ENCODE measurements at regions of chr1 and their contacts with region 1.

Region 1: GRCh38 chr1:235952950-235953615 is 86.4 kb upstream of the LYST start:
- DNase-seq: peak; percentile 36
- H3K4me3 Mint-ChIP-seq: peak overlapping the region; percentile 19
- H3K27ac Mint-ChIP-seq: peak overlapping the region; percentile 40
- H3K4me1 Mint-ChIP-seq: peaks cover 34% of the 10 kb centered on the region
- H3K27me3 Mint-ChIP-seq: peaks cover 30% of the 10 kb centered on the region

Region 2: DNA sequence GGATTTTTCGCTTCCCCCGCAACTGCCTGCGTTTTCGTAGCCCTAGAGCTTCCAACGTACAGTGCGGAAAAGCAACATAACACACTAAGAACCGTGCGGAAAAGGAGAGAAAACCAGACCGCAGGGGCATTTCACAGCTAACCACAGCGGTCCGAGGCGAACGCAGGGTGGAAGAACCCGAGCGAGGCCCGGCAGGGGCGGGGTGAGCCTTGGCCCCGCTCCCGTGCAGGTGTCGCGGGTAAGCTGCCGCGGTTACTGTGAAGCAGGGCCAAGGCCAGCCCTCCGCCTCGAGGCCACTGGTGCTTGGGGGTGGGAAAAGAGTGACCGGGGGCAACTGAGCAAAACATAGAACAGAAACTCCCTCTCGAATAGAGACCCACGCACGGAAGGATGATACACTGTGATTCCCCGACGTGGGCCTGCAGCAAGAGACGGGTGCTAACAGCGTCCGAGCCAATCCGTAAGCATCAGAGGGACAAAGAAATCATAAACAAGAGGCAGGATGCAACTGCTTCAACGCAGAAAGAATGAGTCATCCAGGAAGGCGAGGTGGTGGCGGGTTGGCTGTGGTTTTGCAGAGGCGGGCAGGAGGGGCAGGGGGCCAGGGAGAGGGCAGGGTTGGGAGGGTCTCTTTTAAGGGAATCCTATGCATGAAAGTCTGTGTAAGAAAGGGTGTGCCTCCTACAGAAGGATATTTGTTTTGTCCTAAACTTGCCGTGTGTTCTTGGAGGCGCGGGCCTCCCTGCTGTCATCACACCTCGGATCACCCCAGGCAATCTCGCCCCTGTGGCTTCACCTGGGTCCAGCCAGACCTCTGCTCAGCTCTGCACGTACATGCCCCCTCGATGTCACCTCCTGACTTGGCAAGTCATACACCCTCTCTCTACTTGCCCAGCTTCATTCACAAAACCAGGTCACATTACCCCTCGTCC is 310.8 kb before region 1 on chr1:
- intact Hi-C with region 1: loop called (anchors 1 kb)
- DNase-seq: peak; percentile 76
- H3K4me3 Mint-ChIP-seq: peak overlapping the region; percentile 67
- H3K27ac Mint-ChIP-seq: peak overlapping the region; percentile 92
- H3K4me1 Mint-ChIP-seq: peaks cover 71% of the 10 kb centered on the region
- H3K27me3 Mint-ChIP-seq: peaks cover 17% of the 10 kb centered on the region

Region 3: DNA sequence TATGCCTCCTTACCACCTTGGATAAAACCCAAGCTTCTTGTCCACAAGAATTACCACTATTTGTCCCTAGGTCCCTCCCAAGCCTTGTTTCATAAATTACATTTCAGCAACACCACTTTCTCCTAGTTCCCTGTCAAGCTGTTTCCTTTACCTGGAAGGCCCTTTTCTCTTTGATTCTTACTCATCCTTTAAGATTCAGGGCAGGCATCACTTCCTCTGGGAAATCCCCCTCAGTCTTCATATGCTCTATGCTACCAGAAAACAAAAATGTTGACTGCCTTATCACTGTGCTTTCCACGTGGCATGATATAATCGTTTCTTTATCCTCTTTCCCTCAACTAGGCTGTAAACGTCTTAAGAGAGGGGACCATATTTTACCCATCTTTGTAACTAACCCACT is 189.1 kb before region 1 on chr1:
- intact Hi-C with region 1: loop called (anchors 1 kb)
- DNase-seq: peak; percentile 16
- H3K4me3 Mint-ChIP-seq: no peak overlapping the region
- H3K27ac Mint-ChIP-seq: no peak overlapping the region
- H3K4me1 Mint-ChIP-seq: peaks cover 14% of the 10 kb centered on the region
- H3K27me3 Mint-ChIP-seq: no peaks in the 10 kb centered on the region

Region 4: DNA sequence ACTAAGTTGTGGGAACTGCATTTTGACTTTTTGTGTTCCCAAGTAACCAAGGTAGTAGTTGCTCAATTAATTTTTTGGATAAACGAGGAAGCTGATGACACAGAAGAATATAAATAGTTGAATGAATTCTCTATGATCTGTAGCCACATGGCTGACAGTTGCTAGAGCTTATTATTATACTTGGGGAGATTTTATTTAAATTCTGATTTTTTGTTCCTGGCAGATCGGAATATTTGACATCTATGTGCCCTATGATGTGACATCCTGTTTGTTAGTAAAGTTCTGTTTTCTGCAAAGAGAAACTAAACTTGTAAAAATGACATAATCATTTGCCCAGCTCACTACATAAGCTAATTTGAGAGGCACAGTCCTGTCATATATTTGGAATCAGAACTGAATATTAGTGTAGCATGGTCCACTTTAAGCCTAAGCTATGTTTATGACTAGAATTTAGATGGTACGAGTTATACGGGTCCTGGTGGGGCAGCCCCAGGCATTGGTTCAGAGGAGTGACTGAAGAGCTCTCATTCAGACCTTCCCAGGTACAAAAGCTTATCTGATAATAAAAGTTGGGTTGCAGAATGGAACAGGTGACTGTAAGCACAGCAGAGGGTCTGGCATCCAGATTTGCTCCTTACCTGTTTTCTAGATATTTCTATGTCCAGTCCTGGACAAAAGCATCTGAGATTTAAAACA is 76.5 kb before region 1 on chr1:
- intact Hi-C with region 1: loop called (anchors 1 kb)
- DNase-seq: no peak
- H3K4me3 Mint-ChIP-seq: peak overlapping the region; percentile 69
- H3K27ac Mint-ChIP-seq: peak overlapping the region; percentile 98
- H3K4me1 Mint-ChIP-seq: peaks cover 88% of the 10 kb centered on the region
- H3K27me3 Mint-ChIP-seq: no peaks in the 10 kb centered on the region

Region 5: GRCh38 chr1:235910357-235911299 is 42.5 kb before region 1 on chr1:
- intact Hi-C with region 1: loop called (anchors 1 kb)
- DNase-seq: no peak
- H3K4me3 Mint-ChIP-seq: peak overlapping the region; percentile 41
- H3K27ac Mint-ChIP-seq: peak overlapping the region; percentile 60
- H3K4me1 Mint-ChIP-seq: peaks cover 37% of the 10 kb centered on the region
- H3K27me3 Mint-ChIP-seq: no peaks in the 10 kb centered on the region

Region 6: GRCh38 chr1:235938709-235939479 is 14.2 kb before region 1 on chr1:
- intact Hi-C with region 1: loop called (anchors 1 kb)
- DNase-seq: peak; percentile 10
- H3K4me3 Mint-ChIP-seq: peak overlapping the region; percentile 42
- H3K27ac Mint-ChIP-seq: peak overlapping the region; percentile 84
- H3K4me1 Mint-ChIP-seq: peaks cover 52% of the 10 kb centered on the region
- H3K27me3 Mint-ChIP-seq: peaks cover 4% of the 10 kb centered on the region

Region 7: DNA sequence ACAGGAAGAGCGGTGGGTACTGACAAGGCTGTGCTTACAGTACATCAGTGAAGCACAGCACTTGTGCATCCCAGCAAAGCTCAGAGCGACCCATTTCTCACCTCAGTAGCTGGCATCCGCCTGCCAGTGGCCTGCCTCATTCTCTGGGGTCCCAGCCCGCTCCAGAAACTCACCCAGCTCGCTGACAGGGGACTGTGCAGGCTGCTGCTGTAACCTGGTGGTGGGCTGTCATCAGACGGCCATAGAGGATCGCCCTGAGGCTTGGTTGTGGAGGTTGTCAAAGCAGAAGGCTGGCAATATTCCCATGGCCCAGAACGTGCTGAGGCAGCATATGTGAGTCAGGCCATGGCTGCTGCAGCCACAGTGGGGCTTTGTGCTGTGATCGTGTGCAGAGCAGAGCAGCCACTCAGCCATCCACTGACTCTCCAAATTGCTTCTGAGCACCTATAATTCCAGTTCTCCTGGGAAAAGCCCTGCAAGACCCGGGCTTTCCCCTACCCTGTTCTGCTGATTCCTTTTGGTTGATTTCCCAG is 175.6 kb after region 1 on chr1:
- intact Hi-C with region 1: no loop called
- DNase-seq: no peak
- H3K4me3 Mint-ChIP-seq: no peak overlapping the region
- H3K27ac Mint-ChIP-seq: no peak overlapping the region
- H3K4me1 Mint-ChIP-seq: no peaks in the 10 kb centered on the region
- H3K27me3 Mint-ChIP-seq: peaks cover 23% of the 10 kb centered on the region

Measured in activated T-helper 1 cell treated with anti-CD3 and anti-CD28 coated beads, Interleukin-12 subunit alpha, Interleukin-12 subunit beta, Interleukin-2, Interleukin-4 antibody, amounts not matched to agents 30 ng/mL and 10 ng/mL and 1 ng/mL, durations not matched to agents 14 hours and 24 hours and 36 hours (primary cell).